IMR-90 (cell line): ENCODE measurements at regions of chr13 and their contacts with region 1.

Region 1: DNA sequence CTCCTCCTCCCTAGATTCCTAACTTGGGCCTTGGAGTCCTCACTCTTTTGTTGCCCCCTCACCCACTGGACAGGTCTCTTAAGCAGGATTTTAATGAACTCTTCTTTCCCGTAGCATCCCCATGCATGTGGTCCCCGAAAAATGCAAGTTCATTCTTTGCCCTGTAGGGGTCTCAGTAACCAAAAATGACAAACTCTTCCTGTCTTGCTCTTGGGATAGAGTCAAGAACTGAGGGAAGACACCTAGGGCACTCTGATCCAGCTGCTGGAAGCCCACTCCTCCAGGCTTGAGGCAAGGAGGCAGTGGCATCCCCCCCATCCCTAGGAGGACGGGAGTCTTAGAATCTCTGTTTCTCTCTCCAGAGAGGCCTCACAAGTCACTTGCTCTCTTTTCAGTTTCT is 987.0 kb downstream of the DIAPH3 start:
- DNase-seq: no peak
- ATAC-seq: no peak
- H3K4me3 ChIP-seq: no peak overlapping the region
- H3K27ac ChIP-seq: no peak overlapping the region
- H3K4me1 ChIP-seq: no peaks in the 10 kb centered on the region
- H3K27me3 ChIP-seq: no peaks in the 10 kb centered on the region
- CTCF ChIP-seq: 0 out of 2 replicates have a peak, but pooled peaks have one; percentile 7
- POLR2A ChIP-seq: no peak
- RAD21 ChIP-seq: no peak

Region 2: GRCh38 chr13:58907347-58907746 is 269.4 kb before region 1 on chr13:
- CTCF ChIA-PET with region 1: no interaction called
- POLR2A ChIA-PET with region 1: no interaction called
- dilution Hi-C with region 1: no loop called
- in situ Hi-C with region 1: no loop called
- intact Hi-C with region 1: loop called (anchors 1 kb)
- DNase-seq: peak; percentile 0
- ATAC-seq: no peak
- H3K4me3 ChIP-seq: no peak overlapping the region
- H3K27ac ChIP-seq: no peak overlapping the region
- H3K4me1 ChIP-seq: no peaks in the 10 kb centered on the region
- H3K27me3 ChIP-seq: no peaks in the 10 kb centered on the region
- CTCF ChIP-seq: peak; percentile 27; the same call in 1 of the 2 replicates
- POLR2A ChIP-seq: no peak
- RAD21 ChIP-seq: peak; percentile 32

Region 3: DNA sequence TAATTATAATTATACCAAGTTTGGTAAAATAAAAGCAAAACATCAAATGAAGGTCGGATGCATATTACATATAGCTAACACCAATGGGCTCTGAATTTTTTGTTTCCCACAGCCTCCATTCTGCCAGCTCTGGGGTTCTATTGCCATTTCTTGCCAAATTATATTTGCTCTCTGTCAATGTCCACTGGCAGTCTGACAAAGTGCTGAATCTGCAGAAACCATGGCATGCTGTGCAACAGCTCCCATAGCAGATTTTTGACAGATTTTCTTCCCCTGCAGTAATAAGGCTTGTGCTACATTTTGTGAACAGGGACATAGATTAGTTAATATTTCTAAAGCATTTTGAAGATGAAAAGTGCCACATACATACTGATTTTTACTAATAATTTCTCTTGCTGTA is 115.2 kb before region 1 on chr13:
- CTCF ChIA-PET with region 1: no interaction called
- POLR2A ChIA-PET with region 1: no interaction called
- dilution Hi-C with region 1: no loop called
- in situ Hi-C with region 1: no loop called
- intact Hi-C with region 1: loop called (anchors 10 kb)
- DNase-seq: no peak
- ATAC-seq: no peak
- H3K4me3 ChIP-seq: no peak overlapping the region
- H3K27ac ChIP-seq: no peak overlapping the region
- H3K4me1 ChIP-seq: no peaks in the 10 kb centered on the region
- H3K27me3 ChIP-seq: no peaks in the 10 kb centered on the region; the same call in 1 of the 2 replicates
- CTCF ChIP-seq: no peak
- POLR2A ChIP-seq: no peak
- RAD21 ChIP-seq: no peak